Dendritic cell treated with granulocyte-macrophage colony-stimulating factor and Interleukin-4, amounts not matched to agents 40 ng/mL and 50 ng/mL, for 4 days (primary cell): ENCODE measurements at regions of chr11 and their contacts with region 1.

Region 1: GRCh38 chr11:250740-251299 is 14.0 kb downstream of the PSMD13 start:
- H3K4me3 Mint-ChIP-seq: no peak overlapping the region
- H3K27ac Mint-ChIP-seq: no peak overlapping the region
- H3K4me1 Mint-ChIP-seq: peaks cover 9% of the 10 kb centered on the region
- H3K27me3 Mint-ChIP-seq: peaks cover 1% of the 10 kb centered on the region

Region 2: DNA sequence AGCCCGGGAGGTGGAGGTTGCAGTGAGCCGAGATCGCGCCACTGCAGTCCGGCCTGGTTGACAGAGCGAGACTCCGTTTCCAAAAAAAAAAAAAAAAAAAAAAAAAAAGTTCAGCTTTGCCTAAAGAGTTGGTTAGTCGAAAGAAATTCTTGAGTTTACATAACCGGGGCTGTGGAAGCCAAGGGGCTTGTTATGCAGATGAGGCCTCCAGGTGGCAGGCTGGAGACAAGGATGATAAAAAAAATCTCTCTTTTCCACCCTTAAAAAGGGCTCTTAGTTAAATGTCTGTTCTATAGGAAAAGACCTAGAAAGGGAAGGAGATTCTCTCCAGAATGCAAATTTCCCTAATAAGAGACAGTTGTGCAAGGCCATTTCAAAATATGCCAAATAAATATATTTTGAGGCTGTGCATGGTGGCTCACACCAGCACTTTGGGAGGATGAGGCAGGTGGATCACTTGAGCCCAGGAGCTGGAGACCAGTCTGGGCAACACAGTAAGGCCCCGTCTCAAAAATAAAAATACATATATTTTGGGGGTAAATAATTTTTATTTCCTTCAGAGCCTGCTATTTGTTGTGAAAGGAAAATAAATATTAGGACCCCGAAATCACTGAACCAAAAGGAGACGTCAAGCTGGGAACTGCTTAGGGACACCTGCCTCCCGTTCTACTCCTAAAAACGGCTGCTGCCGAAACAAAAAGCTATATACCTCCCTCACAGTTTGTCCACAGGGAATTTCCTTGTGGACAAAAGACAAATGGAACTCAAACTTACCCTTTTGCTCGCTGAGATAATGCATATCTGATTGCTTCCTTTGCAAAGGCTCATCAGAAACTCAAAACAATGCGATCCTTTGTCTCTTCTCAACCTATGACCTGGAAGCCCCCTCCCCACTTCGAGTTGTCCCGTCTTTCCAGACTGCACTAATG is 54.4 kb after region 1 on chr11:
- intact Hi-C with region 1: loop called (anchors 10 kb)
- H3K4me3 Mint-ChIP-seq: no peak overlapping the region
- H3K27ac Mint-ChIP-seq: no peak overlapping the region
- H3K4me1 Mint-ChIP-seq: peaks cover 39% of the 10 kb centered on the region
- H3K27me3 Mint-ChIP-seq: peaks cover 43% of the 10 kb centered on the region